Calu3 (cell line): ENCODE measurements at regions of chr22 and their contacts with region 1.

Region 1: GRCh38 chr22:29689880-29690213 is 30.0 kb upstream of the CABP7 start:
- DNase-seq: peak; percentile 60
- H3K4me3 Mint-ChIP-seq: no peak overlapping the region
- H3K27ac Mint-ChIP-seq: no peak overlapping the region
- H3K4me1 Mint-ChIP-seq: no peaks in the 10 kb centered on the region
- H3K27me3 Mint-ChIP-seq: no peaks in the 10 kb centered on the region
- CTCF ChIP-seq: peak; percentile 74

Region 2: DNA sequence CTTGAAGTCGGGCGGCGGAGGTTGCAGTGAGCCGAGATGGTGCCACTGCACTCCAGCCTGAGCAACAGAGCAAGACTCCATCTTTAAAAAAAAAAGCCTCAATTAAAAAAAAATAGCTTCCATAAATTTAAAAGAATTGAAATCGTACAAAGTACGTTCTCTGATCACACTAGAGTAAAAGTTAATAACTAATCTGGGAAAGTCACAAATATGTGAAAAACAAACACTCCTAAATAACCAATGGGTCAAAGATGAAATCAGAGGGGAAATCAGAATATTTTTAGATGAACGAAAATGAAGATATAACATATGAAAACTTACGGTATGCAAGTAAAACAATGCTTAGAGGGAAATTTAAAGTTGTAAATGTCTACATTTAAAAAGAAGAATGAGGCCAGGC is 190.0 kb before region 1 on chr22:
- CTCF ChIA-PET with region 1: interaction called, 10 read pairs
- intact Hi-C with region 1: no loop called
- DNase-seq: no peak
- H3K4me3 Mint-ChIP-seq: no peak overlapping the region
- H3K27ac Mint-ChIP-seq: no peak overlapping the region
- H3K4me1 Mint-ChIP-seq: peaks cover 9% of the 10 kb centered on the region
- H3K27me3 Mint-ChIP-seq: no peaks in the 10 kb centered on the region
- CTCF ChIP-seq: no peak

Region 3: DNA sequence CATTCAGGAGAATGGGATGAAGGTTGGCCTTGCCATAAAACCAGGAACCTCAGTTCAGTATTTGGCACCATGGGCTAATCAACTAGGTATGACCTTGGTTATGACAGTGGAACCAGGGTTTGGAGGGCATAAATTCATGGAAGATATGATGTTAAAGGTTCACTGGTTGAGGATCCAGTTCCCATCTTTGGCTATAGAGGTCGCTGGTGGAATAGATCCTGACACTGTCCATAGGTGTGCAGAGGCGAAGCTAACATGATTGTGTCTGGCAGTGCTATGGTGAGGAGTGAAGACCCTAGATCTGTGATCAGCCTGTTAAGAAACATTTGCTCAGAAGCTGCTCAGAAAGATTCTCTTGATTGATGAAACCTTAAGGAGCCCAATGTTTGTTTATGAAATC is 80.7 kb before region 1 on chr22:
- CTCF ChIA-PET with region 1: no interaction called
- intact Hi-C with region 1: no loop called
- DNase-seq: no peak
- H3K4me3 Mint-ChIP-seq: no peak overlapping the region
- H3K27ac Mint-ChIP-seq: no peak overlapping the region
- H3K4me1 Mint-ChIP-seq: peaks cover 15% of the 10 kb centered on the region
- H3K27me3 Mint-ChIP-seq: no peaks in the 10 kb centered on the region
- CTCF ChIP-seq: no peak